Right ventricle myocardium inferior (tissue), 1 donor: ENCODE measurements at regions of chr7 and their contacts with region 1.

Region 1: GRCh38 chr7:155509725-155510551 is 36.4 kb downstream of the CNPY1 start:
- DNase-seq: no peak
- ATAC-seq: no peak

Region 2: GRCh38 chr7:155456738-155457564 is 53.0 kb before region 1 on chr7:
- intact Hi-C with region 1: loop called (anchors 10 kb)
- DNase-seq: peak; percentile 80
- ATAC-seq: peak; percentile 90